Activated CD8-positive, alpha-beta T cell treated with anti-CD3 and anti-CD28 coated beads for 36 hours (primary cell): ENCODE measurements at regions of chr19 and their contacts with region 1.

Region 1: GRCh38 chr19:10269333-10270179 is 1.4 kb upstream of the ICAM1 start:
- DNase-seq: peak; percentile 95
- ATAC-seq: peak; percentile 72
- H3K4me3 Mint-ChIP-seq: peak overlapping the region; percentile 85
- H3K27ac Mint-ChIP-seq: peak overlapping the region; percentile 89
- H3K4me1 Mint-ChIP-seq: peaks cover 20% of the 10 kb centered on the region
- H3K27me3 Mint-ChIP-seq: no peaks in the 10 kb centered on the region
- CTCF ChIP-seq: peak; percentile 97

Region 2: GRCh38 chr19:10155839-10156238 is 113.7 kb before region 1 on chr19:
- CTCF ChIA-PET with region 1: no interaction called
- POLR2A ChIA-PET with region 1: no interaction called
- intact Hi-C with region 1: no loop called
- DNase-seq: no peak
- ATAC-seq: peak; percentile 24
- H3K4me3 Mint-ChIP-seq: no peak overlapping the region
- H3K27ac Mint-ChIP-seq: no peak overlapping the region
- H3K4me1 Mint-ChIP-seq: no peaks in the 10 kb centered on the region
- H3K27me3 Mint-ChIP-seq: no peaks in the 10 kb centered on the region
- CTCF ChIP-seq: no peak

Region 3: GRCh38 chr19:10279737-10280442 is 10.3 kb after region 1 on chr19:
- CTCF ChIA-PET with region 1: interaction called, 21 read pairs
- POLR2A ChIA-PET with region 1: interaction called, 107 read pairs
- intact Hi-C with region 1: no loop called
- DNase-seq: no peak
- ATAC-seq: no peak
- H3K4me3 Mint-ChIP-seq: no peak overlapping the region
- H3K27ac Mint-ChIP-seq: peak overlapping the region; percentile 34
- H3K4me1 Mint-ChIP-seq: peaks cover 16% of the 10 kb centered on the region
- H3K27me3 Mint-ChIP-seq: no peaks in the 10 kb centered on the region
- CTCF ChIP-seq: no peak

Region 4: DNA sequence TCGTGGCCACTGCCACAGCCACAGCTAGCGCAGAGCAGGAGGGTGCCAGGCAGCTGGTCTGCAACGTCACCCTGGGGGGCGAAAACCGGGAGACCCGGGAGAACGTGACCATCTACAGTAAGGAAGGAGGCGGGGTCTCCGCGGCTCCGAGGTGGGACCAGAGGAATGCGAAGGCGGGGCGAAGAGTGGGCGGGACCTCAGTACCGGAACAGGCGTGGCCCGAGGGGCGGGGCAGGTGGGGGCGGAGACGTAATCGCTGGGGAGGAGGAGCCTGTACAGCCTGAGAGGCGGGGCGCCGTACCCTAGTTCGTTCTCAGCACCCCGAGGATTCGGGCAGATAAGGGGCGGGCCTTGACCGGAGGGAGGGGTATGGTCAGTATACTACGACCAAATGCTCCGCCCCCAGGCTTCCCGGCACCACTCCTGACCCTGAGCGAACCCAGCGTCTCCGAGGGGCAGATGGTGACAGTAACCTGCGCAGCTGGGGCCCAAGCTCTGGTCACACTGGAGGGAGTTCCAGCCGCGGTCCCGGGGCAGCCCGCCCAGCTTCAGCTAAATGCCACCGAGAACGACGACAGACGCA is 22.7 kb after region 1 on chr19:
- CTCF ChIA-PET with region 1: interaction called, 32 read pairs
- POLR2A ChIA-PET with region 1: interaction called, 107 read pairs
- intact Hi-C with region 1: no loop called
- DNase-seq: peak; percentile 87
- ATAC-seq: peak; percentile 59
- H3K4me3 Mint-ChIP-seq: peak overlapping the region; percentile 73
- H3K27ac Mint-ChIP-seq: no peak overlapping the region
- H3K4me1 Mint-ChIP-seq: peaks cover 62% of the 10 kb centered on the region
- H3K27me3 Mint-ChIP-seq: peaks cover 75% of the 10 kb centered on the region
- CTCF ChIP-seq: no peak

Region 5: GRCh38 chr19:10380313-10381102 is 111.0 kb after region 1 on chr19 and contains the start of gene TYK2:
- CTCF ChIA-PET with region 1: interaction called, 286 read pairs
- POLR2A ChIA-PET with region 1: interaction called, 12 read pairs
- intact Hi-C with region 1: no loop called
- DNase-seq: peak; percentile 98
- ATAC-seq: peak; percentile 98
- H3K4me3 Mint-ChIP-seq: peak within 1 kb of the TSS; percentile 94
- H3K27ac Mint-ChIP-seq: peak within 1 kb of the TSS; percentile 96
- H3K4me1 Mint-ChIP-seq: peaks cover 21% of the 10 kb centered on the region
- H3K27me3 Mint-ChIP-seq: no peaks in the 10 kb centered on the region
- CTCF ChIP-seq: no peak
- total RNA-seq, gene TYK2: 143 TPM